Posterior cingulate gyrus (tissue), 11 donors: ENCODE measurements at regions of chr14 and their contacts with region 1.

Region 1: GRCh38 chr14:28751467-28752058 is 15.0 kb upstream of the FOXG1 start:
- DNase-seq: peak in 3 of 10 donors; percentile 50 to 85 (median 58)

Region 2: GRCh38 chr14:29536886-29537511 is 785.4 kb after region 1 on chr14:
- intact Hi-C with region 1: loop called (anchors 5 kb)
- DNase-seq: no peak

Region 3: GRCh38 chr14:30005114-30005808 is 1253.7 kb after region 1 on chr14:
- intact Hi-C with region 1: loop called (anchors 10 kb)
- DNase-seq: no peak

Region 4: GRCh38 chr14:30214461-30215090 is 1463.0 kb after region 1 on chr14:
- intact Hi-C with region 1: loop called (anchors 1 kb)
- DNase-seq: peak in 3 of 10 donors; percentile 3 to 61 (median 8)

Region 5: DNA sequence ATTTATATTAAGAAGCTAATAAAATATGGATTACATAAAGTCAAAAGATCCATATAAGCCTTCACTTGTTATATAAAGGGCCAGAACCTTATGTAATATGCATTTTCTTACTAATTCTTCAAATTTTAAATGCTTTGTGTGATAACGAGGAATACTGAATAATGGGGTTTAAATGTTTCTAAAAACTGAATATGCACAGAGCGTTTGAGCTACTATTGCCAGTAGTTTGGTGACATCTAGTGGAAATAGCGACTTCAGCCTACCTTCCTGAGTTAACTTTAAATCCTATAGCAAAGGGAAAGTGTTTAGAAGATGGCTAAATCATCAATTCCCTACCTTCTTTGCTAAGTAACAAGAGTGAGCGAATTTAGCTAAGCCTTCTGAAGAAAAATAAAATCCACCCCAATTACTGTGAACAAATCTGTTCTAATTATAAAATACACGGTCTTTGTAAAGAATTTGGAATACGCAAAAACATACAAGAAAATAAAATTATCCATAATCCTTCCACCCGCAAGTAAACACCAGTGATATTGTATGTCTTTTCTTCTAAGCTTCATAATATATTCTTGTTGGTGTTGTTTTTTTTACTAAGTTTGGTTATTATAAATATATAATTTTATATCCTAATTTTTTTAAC is 1691.9 kb after region 1 on chr14:
- intact Hi-C with region 1: loop called (anchors 2 kb)
- DNase-seq: no peak

Region 6: DNA sequence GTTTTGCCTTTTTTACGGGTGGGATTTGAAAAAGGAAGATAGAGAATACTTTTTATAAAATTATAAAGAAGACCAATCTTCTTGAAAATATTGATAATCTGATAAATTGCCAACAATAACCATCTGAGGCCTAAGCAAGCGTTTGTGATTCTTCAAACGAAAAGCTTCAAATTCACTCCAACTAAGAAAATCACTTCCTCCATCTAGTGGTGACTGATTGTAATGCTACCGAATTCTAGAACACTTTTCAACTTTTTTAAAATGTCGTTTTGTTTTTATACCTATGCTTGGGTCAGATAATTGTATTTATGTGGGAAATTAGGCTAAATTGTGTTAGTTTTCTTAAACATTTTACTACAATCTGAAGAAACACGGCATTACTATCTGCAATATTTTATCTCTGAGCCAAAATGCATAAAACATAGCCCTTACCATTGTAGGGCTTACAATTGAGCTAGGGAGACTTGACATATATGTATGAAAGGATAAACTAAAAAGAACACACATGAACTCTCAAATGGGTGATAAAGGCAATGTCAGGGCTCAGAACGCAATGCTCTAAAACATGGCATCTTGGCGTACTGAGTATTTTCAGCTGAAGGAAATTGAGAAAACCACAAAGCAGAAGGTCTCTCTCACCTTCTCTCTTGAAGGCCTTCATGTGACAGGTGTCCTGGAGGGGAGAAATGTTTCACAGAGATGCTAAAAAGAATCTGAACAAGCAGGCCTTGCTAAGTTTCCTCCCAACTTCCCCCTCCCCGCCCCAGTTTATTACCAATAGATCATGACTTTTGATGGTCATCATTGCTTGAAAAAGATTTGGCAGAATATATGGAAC is 1770.6 kb after region 1 on chr14:
- intact Hi-C with region 1: loop called (anchors 5 kb)
- DNase-seq: no peak